ENCODE measurements at regions of chr6 and their contacts with region 1.

Region 1: GRCh38 chr6:12656906-12657305 is 59.7 kb upstream of the PHACTR1 start:
- DNase-seq: no peak
- H3K4me3 ChIP-seq: no peak overlapping the region
- H3K27ac ChIP-seq: no peak overlapping the region
- H3K4me1 ChIP-seq: no peaks in the 10 kb centered on the region
- H3K27me3 ChIP-seq: no peaks in the 10 kb centered on the region
- CTCF ChIP-seq: no peak
- POLR2A ChIP-seq: no peak

Region 2: DNA sequence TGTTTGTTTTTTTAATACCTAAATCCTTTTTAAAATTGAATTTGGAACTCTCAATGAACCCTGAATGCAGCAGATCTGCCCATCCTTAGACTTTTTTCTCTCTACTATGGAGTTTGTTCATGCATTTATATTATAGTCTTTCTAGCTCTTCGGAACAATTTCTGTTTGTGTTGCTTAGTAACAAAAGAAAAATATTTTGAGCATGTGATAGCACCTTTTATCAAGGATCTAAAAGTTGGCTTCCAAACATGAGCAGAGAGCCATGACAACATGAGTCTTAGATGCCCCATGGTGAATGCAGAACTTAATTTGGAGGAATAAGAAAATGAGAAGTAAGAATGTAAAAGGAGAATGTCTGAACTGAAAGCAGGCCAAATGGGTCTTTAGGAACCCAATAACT is 233.1 kb before region 1 on chr6:
- intact Hi-C with region 1: no loop called
- DNase-seq: no peak
- H3K4me3 ChIP-seq: no peak overlapping the region
- H3K27ac ChIP-seq: no peak overlapping the region
- H3K4me1 ChIP-seq: no peaks in the 10 kb centered on the region
- H3K27me3 ChIP-seq: no peaks in the 10 kb centered on the region
- CTCF ChIP-seq: no peak
- POLR2A ChIP-seq: no peak

Region 3: DNA sequence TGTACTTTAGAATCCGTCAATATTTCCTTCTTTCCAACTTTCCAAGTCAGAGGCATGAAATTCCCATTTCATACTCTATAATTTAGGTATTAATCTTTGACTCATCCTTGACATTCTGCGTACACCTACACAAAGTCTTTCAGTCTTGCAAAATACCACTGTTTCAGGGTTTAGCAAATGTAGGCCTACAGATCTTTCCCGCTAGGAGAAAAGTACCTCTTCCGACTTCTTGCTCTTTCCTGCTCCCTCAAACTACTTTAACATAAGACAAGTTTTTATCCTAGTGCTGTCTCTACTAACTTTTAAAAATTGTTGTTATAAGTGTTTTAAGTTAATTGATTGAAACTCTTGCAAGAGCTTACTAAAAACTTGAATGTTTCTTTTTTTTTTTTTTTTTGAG is 41.4 kb after region 1 on chr6:
- intact Hi-C with region 1: no loop called
- DNase-seq: no peak
- H3K4me3 ChIP-seq: no peak overlapping the region
- H3K27ac ChIP-seq: no peak overlapping the region
- H3K4me1 ChIP-seq: no peaks in the 10 kb centered on the region
- H3K27me3 ChIP-seq: no peaks in the 10 kb centered on the region
- CTCF ChIP-seq: no peak
- POLR2A ChIP-seq: no peak

Region 4: DNA sequence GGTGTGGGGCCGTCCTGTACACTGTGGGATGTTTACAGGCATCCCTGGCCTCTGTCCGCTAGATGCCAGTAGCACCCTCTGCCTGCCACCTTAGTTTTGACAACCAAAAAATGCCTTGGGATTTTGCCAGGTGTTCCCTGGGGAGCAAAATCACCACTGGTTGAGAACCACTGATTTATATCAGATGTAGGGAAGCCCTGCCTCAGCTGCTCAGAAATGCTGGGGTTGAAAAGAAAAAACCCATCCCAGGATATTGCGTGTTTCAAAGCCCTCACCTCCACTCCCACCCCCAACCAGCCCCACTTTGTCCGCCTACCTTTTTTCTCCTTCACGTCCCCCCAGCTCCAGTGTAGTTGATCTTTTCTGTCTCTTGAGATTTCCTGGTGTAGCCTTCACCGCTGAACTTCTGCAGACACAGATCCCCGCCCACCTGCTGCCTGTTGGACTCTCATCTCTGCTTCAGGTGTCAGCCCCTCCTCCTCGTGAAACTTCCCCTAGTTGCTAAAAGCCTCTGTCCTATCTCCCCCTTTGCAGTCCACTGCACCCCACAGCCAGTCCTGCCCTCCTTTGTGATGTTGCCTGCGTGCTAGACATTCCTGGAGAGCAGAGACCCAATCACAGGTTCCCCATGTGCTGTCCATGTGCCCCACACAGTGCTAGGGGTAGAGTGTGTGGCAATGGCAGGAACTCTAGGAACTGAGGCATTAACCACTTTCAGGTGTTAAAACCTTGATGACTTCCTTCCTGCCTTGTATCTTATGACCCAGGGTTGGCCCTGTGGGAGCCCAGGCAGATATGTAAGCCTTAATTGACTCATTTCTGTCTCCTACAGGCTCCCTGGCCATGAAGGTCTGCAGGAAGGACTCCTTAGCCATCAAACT is 572.5 kb after region 1 on chr6:
- intact Hi-C with region 1: loop called (anchors 5 kb)
- DNase-seq: no peak
- H3K4me3 ChIP-seq: no peak overlapping the region
- H3K27ac ChIP-seq: no peak overlapping the region
- H3K4me1 ChIP-seq: no peaks in the 10 kb centered on the region
- H3K27me3 ChIP-seq: no peaks in the 10 kb centered on the region
- CTCF ChIP-seq: no peak
- POLR2A ChIP-seq: no peak

Measured in vagina (tissue), 2 donors.